Activated CD8-positive, alpha-beta T cell treated with anti-CD3 and anti-CD28 coated beads for 36 hours (primary cell): ENCODE measurements at regions of chr12 and their contacts with region 1.

Region 1: DNA sequence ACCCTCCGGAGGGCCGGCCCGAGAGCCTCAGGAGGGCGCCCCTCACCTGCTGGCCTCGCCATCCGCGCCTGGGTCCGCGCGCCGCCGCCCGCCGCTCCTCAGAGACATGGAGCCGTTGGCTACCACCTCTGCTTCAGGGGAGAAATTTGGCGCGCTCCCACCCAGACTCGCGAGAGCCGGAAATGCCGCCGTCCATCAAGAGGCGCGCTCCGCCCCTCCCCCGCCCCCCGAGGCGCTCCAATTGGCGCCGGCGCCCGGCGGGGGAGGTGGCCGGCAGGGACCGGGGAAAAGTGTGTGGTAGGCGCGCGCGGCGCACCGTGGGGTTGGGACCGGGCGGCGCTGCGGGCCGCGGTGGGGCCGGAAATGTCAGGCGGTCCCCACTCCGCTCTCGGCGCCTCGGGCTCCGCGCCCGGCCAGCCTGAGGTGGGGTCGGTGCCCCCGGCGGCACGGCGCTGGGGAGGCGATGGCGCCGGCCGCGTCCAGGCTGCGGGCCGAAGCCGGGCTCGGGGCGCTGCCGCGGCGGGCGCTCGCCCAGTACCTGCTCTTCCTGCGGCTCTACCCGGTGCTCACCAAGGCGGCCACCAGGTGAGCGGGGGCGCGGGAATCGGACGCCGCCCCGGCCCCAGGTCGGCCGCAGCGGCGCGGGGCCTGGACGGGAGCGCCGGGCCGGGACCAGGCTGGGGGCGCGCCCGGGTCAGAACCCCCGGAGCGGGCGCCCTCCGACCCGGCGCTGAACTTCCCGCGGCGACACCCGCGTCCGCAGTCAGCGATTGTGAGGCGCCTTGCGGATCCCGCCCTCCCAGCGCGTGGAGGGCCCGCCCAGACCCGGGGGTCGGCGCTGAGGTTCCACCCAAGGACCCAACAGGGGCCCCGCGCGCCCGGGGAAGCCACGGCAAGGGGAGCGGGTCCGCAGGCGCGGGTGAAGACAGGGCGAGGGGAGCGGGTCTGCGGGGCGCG is at the starts of genes POLE and PXMP2:
- DNase-seq: peak; percentile 98
- ATAC-seq: peak; percentile 92
- H3K4me3 Mint-ChIP-seq: peak within 1 kb of the TSS; percentile 76
- H3K27ac Mint-ChIP-seq: peak within 1 kb of the TSS; percentile 82
- H3K4me1 Mint-ChIP-seq: peaks cover 17% of the 10 kb centered on the region
- H3K27me3 Mint-ChIP-seq: no peaks in the 10 kb centered on the region
- CTCF ChIP-seq: no peak
- total RNA-seq, gene POLE: 115 to 121 TPM
- total RNA-seq, gene PXMP2: 14.3 TPM

Region 2: GRCh38 chr12:132675781-132676432 is 11.6 kb before region 1 on chr12:
- CTCF ChIA-PET with region 1: no interaction called
- POLR2A ChIA-PET with region 1: interaction called, 11 read pairs
- intact Hi-C with region 1: no loop called
- DNase-seq: no peak
- ATAC-seq: no peak
- H3K4me3 Mint-ChIP-seq: no peak overlapping the region
- H3K27ac Mint-ChIP-seq: no peak overlapping the region
- H3K4me1 Mint-ChIP-seq: no peaks in the 10 kb centered on the region
- H3K27me3 Mint-ChIP-seq: no peaks in the 10 kb centered on the region
- CTCF ChIP-seq: no peak

Region 3: DNA sequence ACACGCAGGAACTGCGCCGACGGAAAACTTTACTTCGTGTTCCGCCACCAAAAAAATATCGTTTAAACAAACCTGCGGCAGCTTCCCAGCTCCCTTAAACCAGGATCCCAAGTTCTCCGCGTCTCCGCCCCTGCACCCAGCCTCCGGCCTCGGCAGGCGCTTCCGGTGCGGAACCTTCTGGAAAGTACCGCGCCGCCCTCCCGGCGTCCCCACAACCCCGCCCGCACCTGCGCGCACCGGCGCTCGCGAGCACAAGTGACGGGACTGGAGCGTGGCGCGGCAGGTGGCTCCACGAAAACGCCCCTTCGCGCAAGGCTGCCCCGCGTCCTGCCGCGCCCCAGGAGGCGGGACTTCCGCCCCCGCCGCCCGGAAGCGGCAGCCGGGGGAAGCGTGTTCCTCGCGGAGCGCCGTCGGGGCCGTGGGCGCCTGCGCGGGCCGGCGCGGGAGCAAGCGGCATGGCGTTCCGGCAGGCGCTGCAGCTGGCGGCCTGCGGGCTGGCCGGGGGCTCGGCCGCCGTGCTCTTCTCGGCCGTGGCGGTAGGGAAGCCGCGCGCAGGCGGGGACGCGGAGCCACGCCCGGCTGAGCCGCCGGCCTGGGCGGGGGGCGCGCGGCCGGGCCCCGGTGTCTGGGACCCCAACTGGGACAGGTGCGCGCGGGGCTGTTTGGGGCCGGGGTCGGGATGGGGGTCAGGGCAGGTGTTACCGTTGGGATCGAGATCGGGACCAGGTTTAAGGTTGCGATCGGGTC is 23.1 kb after region 1 on chr12 and contains the start of gene PGAM5:
- CTCF ChIA-PET with region 1: no interaction called
- POLR2A ChIA-PET with region 1: interaction called, 13 read pairs
- intact Hi-C with region 1: loop called (anchors 2 kb)
- DNase-seq: peak; percentile 86
- ATAC-seq: peak; percentile 94
- H3K4me3 Mint-ChIP-seq: peak within 1 kb of the TSS; percentile 87
- H3K27ac Mint-ChIP-seq: peak within 1 kb of the TSS; percentile 84
- H3K4me1 Mint-ChIP-seq: peaks cover 20% of the 10 kb centered on the region
- H3K27me3 Mint-ChIP-seq: no peaks in the 10 kb centered on the region
- CTCF ChIP-seq: no peak
- total RNA-seq, gene PGAM5: 69.6 to 73.2 TPM